Cardiac septum (tissue), 1 donor: ENCODE measurements at regions of chr9 and their contacts with region 1.

Region 1: GRCh38 chr9:124320062-124320973 is 62.6 kb downstream of the NEK6 start:
- DNase-seq: peak; percentile 87

Region 2: DNA sequence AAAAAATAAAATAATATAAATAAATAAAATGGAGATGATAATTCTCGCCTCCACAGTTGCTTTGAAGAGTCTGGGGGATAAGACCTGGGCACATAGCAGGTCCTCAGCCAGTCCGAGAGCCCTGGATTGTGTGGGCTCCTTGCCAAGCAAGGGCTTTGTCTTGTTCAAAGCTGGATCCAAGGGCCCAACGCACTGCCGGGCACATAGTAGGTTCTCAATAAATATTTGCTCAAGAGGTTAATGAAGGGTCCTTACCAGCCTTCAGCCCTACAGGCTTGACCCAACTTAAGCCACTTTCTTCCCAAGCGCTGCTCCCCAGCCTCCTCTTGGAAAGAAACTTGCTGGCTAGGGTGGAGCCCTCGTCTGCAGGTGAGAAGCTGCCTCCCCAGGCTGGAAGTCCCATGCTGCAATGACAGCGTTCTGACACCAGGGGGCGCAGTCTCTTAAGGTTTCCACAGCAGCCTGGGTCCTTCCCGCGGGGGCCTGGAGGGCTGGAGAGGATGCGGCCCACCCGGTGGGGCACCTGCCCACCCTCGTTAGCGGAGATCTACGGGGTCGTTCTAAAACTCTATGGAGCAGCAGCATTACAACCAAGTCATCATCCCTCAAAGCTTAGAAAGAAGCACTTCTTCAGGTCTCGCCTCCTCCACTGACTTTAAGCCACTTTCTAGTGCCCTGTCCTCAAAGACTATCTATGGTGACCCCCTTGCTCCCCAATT is 193.6 kb before region 1 on chr9:
- intact Hi-C with region 1: loop called (anchors 2 kb)
- DNase-seq: peak; percentile 90

Region 3: GRCh38 chr9:124291801-124292396 is 28.4 kb before region 1 on chr9:
- intact Hi-C with region 1: no loop called
- DNase-seq: no peak